ENCODE measurements at regions of chr15 and their contacts with region 1.

Region 1: GRCh38 chr15:68875377-68876116 is 54.8 kb upstream of the SPESP1 start:
- DNase-seq: peak; percentile 93 to 95
- ATAC-seq: peak; percentile 87 to 99 (median 92)
- H3K4me3 ChIP-seq: peak overlapping the region; percentile 60
- H3K27ac ChIP-seq: no peak overlapping the region
- H3K4me1 ChIP-seq: no peaks in the 10 kb centered on the region
- H3K27me3 ChIP-seq: peaks cover 0 to 13% (median 4%) of the 10 kb centered on the region in 3 donors
- CTCF ChIP-seq: peak; percentile 89

Region 2: DNA sequence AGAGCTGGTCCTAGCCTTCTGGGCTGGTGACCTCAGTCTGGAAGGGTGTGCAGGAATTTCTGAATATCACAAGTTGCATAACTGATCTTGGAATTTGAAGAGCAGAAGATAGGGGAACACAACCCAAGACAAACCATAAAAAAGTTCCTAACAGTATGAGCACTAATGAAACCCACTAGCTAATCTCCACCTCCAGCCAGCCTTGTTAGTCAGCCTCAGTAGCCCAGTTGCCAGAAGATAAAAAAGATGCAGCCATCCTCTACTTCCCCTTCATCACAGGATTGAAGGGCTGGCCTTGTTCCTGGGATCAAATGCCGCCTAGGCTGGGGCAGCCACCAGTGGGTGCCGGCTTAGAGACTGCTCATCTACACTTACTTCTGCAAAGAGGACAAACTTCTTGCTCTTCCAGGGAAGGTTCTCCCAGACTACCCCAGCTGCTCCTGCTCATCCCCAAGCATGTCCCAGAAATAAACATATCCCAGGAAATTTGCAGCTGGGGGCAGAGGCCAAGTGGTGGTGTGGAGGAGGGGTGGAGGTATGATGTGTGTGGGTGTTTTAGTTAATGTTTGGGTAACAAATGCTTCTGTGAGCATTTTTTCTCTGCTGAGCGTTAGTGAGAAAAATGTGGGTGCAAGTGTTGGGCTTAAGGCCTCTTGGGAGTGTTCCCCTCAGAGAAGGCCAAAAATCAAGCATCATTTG is 434.4 kb before region 1 on chr15:
- intact Hi-C with region 1: no loop called
- DNase-seq: no peak
- ATAC-seq: no peak
- H3K4me3 ChIP-seq: no peak overlapping the region
- H3K27ac ChIP-seq: no peak overlapping the region
- H3K4me1 ChIP-seq: no peaks in the 10 kb centered on the region
- H3K27me3 ChIP-seq: peaks cover 0 to 18% (median 2%) of the 10 kb centered on the region in 3 donors
- CTCF ChIP-seq: no peak

Region 3: GRCh38 chr15:68550481-68551295 is 324.9 kb before region 1 on chr15:
- intact Hi-C with region 1: loop called (anchors 2 to 5 kb)
- DNase-seq: peak; percentile 63 to 80
- ATAC-seq: peak in 3 of 4 donors; percentile 46 to 76 (median 58)
- H3K4me3 ChIP-seq: no peak overlapping the region
- H3K27ac ChIP-seq: no peak overlapping the region
- H3K4me1 ChIP-seq: no peaks in the 10 kb centered on the region
- H3K27me3 ChIP-seq: peaks cover 0 to 5% (median 0%) of the 10 kb centered on the region in 3 donors
- CTCF ChIP-seq: peak; percentile 95

Region 4: GRCh38 chr15:68559345-68560310 is 315.9 kb before region 1 on chr15:
- intact Hi-C with region 1: loop called (anchors 2 to 5 kb)
- DNase-seq: peak; percentile 79 to 90
- ATAC-seq: peak; percentile 92 to 98 (median 94)
- H3K4me3 ChIP-seq: peak overlapping the region; percentile 58
- H3K27ac ChIP-seq: no peak overlapping the region
- H3K4me1 ChIP-seq: no peaks in the 10 kb centered on the region
- H3K27me3 ChIP-seq: no peaks in the 10 kb centered on the region
- CTCF ChIP-seq: peak; percentile 95

Region 5: DNA sequence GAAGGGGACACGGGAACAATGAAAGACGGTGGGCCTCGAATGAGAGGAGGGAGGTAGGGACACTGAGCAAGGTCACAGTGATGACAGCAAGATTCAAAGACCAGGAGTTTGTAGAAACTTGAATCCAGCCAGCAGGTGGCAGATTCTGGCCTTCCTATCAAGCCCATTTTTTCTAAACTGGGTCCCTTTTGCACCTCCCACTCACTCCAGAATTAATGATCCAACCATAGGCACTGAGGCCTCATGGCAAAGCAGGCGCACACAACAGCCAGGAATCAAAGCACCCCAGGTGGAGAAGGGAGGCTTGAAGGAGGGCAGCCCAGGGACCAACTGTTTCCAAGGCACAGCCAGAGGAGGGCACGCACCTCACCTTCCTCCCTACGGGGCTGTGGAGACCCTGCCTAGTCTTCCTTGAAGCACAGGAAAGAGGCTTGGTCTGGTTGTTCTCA is 145.1 kb before region 1 on chr15:
- intact Hi-C with region 1: loop called (anchors 2 to 5 kb)
- DNase-seq: peak in 1 of 2 donors; percentile 52
- ATAC-seq: peak; percentile 44 to 70 (median 52)
- H3K4me3 ChIP-seq: no peak overlapping the region
- H3K27ac ChIP-seq: peak overlapping the region; percentile 46
- H3K4me1 ChIP-seq: peaks cover 7% of the 10 kb centered on the region
- H3K27me3 ChIP-seq: no peaks in the 10 kb centered on the region
- CTCF ChIP-seq: peak; percentile 53

Region 6: GRCh38 chr15:68783226-68784058 is 92.1 kb before region 1 on chr15:
- intact Hi-C with region 1: loop called (anchors 2 to 5 kb)
- DNase-seq: peak in 1 of 2 donors; percentile 51
- ATAC-seq: peak; percentile 71 to 87 (median 82)
- H3K4me3 ChIP-seq: no peak overlapping the region
- H3K27ac ChIP-seq: no peak overlapping the region
- H3K4me1 ChIP-seq: peaks cover 4% of the 10 kb centered on the region
- H3K27me3 ChIP-seq: no peaks in the 10 kb centered on the region
- CTCF ChIP-seq: peak; percentile 72

Region 7: DNA sequence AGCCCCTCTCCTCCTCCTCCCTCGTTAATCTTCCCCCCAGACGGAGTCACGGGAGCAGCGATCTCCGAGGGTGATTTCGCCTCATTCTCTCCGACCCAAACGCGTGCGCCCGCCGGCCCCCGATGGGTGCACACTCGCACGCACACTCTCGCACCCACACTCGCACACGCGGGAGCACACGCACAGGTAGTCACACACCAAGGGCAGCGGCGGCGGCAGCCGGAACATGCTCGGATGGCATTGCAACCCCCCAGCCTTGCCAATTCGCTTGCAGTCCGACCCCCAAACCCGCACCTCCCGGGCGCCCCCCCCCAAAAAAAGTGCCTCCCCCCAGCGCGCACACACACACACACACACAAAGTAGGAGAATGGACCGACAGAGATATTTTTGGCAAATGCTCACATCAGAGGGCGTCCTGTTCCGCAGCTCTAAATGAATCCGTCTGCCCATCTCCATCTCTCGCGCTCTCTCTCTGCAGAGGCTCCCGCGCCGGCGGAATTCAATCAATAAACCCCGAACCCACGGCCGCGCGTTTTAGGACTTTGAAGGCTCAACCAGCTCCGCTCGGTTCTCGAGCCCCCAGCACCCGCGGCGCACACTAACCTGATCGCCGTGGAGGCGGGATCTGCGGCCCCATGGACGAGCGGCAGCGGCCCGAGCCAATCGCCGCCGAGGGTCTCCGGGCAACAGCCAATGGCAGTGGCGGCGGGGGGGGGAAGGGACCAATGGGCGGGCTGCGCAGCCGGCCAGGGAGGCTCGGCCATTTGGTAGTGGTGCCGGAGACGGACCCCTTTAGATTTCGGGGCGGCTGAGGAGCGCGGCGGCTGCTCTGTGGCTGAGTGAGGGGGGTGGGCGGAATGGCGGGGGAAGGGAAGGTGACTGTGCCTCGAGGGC is 55.0 kb before region 1 on chr15 and contains the start of gene ANP32A:
- intact Hi-C with region 1: loop called in 1 of 2 experiments (anchors 10 kb)
- DNase-seq: peak; percentile 98 to 99
- ATAC-seq: peak; percentile 77 to 84 (median 82)
- H3K4me3 ChIP-seq: peak within 1 kb of the TSS; percentile 86
- H3K27ac ChIP-seq: peak within 1 kb of the TSS; percentile 99
- H3K4me1 ChIP-seq: peaks cover 18% of the 10 kb centered on the region
- H3K27me3 ChIP-seq: no peaks in the 10 kb centered on the region
- CTCF ChIP-seq: no peak
- total RNA-seq, gene ANP32A: 56.7 to 89.2 (median 83.3) TPM

Region 8: DNA sequence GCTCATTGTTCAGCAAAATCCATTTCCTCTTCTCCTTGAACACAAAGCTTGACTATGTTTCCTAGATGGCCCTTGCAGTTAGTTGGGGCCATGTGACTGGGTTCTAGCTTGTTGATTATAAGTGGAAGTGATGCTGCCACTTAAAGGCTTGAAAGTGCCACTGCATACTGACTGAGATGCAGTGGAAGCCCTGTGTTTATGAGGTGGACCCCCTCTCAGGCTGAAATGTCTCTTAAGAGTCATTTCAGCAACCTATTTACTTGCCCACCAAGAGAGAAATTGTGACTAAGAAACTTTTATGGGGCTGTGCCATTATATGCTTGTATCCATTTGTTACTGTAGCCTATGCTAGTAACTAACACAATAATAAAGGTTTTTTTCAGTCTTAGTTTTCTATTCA is 46.5 kb before region 1 on chr15:
- intact Hi-C with region 1: loop called (anchors 5 to 10 kb)
- DNase-seq: no peak
- ATAC-seq: peak in 2 of 4 donors; percentile 75 to 76
- H3K4me3 ChIP-seq: no peak overlapping the region
- H3K27ac ChIP-seq: no peak overlapping the region
- H3K4me1 ChIP-seq: no peaks in the 10 kb centered on the region
- H3K27me3 ChIP-seq: no peaks in the 10 kb centered on the region
- CTCF ChIP-seq: peak; percentile 51